Panc1 (cell line): ENCODE measurements at regions of chr14 and their contacts with region 1.

Region 1: DNA sequence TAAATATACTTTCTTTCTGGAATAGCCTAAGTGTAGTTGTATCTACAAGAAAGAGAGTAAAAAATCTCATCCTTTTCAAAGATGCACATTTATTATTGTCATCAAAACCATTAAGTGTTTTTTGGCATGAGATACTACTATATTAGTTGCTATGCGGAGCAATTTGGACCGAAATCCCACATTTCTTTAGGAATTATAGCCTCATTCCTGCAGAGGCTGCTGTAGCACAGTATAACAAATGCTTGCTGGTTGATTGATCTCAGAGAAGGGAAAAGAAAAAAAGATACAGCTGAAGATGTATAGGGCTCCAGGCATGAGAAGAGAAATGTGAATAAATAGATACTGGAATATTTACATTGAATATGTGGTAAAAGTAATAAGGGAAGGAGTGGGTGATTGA is 36.0 kb downstream of the RHOJ start:
- DNase-seq: no peak
- ATAC-seq: no peak
- H3K4me3 ChIP-seq: no peak overlapping the region
- H3K27ac ChIP-seq: no peak overlapping the region
- H3K4me1 ChIP-seq: no peaks in the 10 kb centered on the region
- H3K27me3 ChIP-seq: no peaks in the 10 kb centered on the region
- CTCF ChIP-seq: no peak

Region 2: DNA sequence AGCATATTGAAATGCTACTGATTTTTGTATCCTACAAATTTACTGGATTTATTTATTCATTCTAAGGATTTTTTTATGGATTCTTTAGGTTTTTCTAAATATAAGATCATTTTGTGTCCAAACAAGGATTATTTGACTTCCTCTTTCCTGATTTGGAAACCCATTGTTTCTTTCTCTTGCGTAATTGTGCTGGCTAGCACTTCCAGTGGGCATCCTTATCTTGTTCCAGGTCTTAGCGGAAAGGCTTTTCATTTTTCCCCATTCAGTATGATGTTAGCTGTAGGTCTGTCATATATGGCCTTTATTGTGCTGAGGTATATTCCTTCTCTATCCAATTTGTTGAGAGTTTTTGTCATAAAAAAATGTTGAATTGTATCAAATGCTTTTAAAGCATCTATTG is 93.2 kb before region 1 on chr14:
- CTCF ChIA-PET with region 1: interaction called, 10 read pairs
- POLR2A ChIA-PET with region 1: no interaction called
- in situ Hi-C with region 1: no loop called
- intact Hi-C with region 1: no loop called
- DNase-seq: no peak
- ATAC-seq: no peak
- H3K4me3 ChIP-seq: no peak overlapping the region
- H3K27ac ChIP-seq: no peak overlapping the region
- H3K4me1 ChIP-seq: no peaks in the 10 kb centered on the region
- H3K27me3 ChIP-seq: no peaks in the 10 kb centered on the region
- CTCF ChIP-seq: no peak

Region 3: DNA sequence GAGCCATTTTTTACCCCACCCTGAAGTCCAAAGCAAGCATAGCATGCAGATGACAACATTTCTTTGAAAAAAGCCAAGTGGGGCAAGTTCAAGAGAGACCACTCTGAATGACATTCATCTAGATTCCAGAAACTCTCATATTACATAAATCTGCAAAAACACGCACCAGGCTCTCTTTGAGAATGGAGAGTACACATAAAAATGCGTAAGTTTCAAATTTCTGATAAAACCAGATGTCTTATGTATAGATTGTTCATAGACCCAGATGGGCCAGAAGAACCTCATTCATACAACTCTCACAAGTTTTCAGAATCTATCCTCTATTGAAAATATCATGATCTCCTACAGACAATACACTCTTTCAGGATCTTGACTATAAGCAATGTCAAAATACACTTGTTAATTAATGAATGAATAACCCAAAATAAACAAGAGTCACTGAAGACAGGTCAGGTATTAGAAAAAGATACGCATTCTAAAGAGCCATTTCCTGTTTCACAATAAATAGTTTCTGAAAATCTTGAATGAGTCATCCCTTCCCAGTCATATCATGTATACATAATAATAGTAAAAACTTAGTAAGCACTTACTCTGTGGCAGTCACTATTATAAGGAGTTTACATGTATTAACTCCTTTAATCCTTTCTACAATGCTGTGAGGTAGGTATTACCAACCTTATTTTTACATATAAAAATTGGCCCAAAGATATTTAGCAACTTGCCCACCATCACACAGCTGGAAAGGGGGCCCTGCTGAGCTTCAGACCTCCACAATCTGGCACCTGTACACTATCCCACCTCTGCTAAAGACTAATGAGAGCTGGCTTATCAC is 231.0 kb after region 1 on chr14:
- CTCF ChIA-PET with region 1: no interaction called
- POLR2A ChIA-PET with region 1: no interaction called
- in situ Hi-C with region 1: no loop called
- intact Hi-C with region 1: no loop called
- DNase-seq: no peak
- ATAC-seq: no peak
- H3K4me3 ChIP-seq: no peak overlapping the region
- H3K27ac ChIP-seq: no peak overlapping the region
- H3K4me1 ChIP-seq: peaks cover 19% of the 10 kb centered on the region
- H3K27me3 ChIP-seq: no peaks in the 10 kb centered on the region
- CTCF ChIP-seq: no peak